Ascending aorta (tissue), 2 donors: ENCODE measurements at regions of chr18 and their contacts with region 1.

Region 1: DNA sequence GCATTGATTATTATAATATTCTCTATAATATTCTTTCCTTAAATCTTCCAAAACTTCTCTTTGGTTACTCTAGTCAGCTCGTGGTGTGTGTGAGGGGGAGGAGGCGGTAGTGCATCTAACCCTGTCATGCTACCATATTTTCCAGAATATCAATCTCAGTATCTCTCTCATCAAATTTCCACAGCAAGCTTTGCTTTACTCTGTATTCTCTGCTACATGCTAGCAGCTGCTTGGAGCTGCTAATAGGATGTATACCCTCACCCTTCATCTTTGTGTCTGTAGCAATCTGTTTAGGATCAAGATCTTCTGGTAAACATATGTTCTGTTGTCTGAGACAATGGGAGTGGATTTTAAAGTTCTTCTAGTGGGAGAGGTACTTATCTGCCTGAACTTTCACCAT is 303.8 kb upstream of the KLHL14 start:
- DNase-seq: no peak
- H3K4me3 ChIP-seq: no peak overlapping the region
- H3K27ac ChIP-seq: no peak overlapping the region
- H3K4me1 ChIP-seq: no peaks in the 10 kb centered on the region
- H3K27me3 ChIP-seq: no peaks in the 10 kb centered on the region
- CTCF ChIP-seq: no peak

Region 2: GRCh38 chr18:32956591-32957315 is 119.8 kb before region 1 on chr18:
- intact Hi-C with region 1: no loop called
- DNase-seq: no peak
- H3K4me3 ChIP-seq: no peak overlapping the region
- H3K27ac ChIP-seq: no peak overlapping the region
- H3K4me1 ChIP-seq: no peaks in the 10 kb centered on the region
- H3K27me3 ChIP-seq: no peaks in the 10 kb centered on the region
- CTCF ChIP-seq: no peak

Region 3: GRCh38 chr18:33010149-33010548 is 66.5 kb before region 1 on chr18:
- intact Hi-C with region 1: loop called (anchors 10 kb)
- DNase-seq: no peak
- H3K4me3 ChIP-seq: no peak overlapping the region
- H3K27ac ChIP-seq: no peak overlapping the region
- H3K4me1 ChIP-seq: no peaks in the 10 kb centered on the region
- H3K27me3 ChIP-seq: no peaks in the 10 kb centered on the region
- CTCF ChIP-seq: no peak